ENCODE measurements at regions of chr18 and their contacts with region 1.

Region 1: GRCh38 chr18:11034884-11035283 is 114.5 kb downstream of the PIEZO2 start:
- DNase-seq: peak; percentile 5
- H3K4me3 Mint-ChIP-seq: no peak overlapping the region
- H3K27ac Mint-ChIP-seq: no peak overlapping the region
- H3K4me1 Mint-ChIP-seq: peaks cover 10% of the 10 kb centered on the region
- H3K27me3 Mint-ChIP-seq: no peaks in the 10 kb centered on the region
- CTCF ChIP-seq: no peak

Region 2: DNA sequence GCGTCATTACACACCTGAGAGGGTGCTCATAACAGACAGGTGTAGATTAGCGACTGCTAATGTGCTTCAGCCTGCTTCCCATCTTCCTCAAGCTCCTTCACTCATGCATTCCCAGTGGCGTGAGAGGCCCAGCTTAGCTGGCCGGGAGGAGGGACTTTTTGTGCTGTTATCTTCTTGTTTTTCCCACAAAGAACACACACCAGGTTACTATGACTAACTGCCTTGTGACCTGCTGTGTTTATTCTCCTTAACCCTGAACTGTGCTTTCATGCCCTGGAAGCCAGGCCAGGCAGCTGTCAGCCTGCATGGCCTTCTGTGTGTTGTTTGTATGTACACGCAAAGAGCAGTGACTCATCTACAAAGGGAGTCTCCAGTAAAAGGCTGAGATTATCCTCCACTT is 29.4 kb before region 1 on chr18:
- CTCF ChIA-PET with region 1: interaction called, 5 read pairs
- POLR2A ChIA-PET with region 1: interaction called, 11 read pairs
- intact Hi-C with region 1: loop called (anchors 5 kb)
- DNase-seq: peak; percentile 56
- H3K4me3 Mint-ChIP-seq: peak overlapping the region; percentile 66
- H3K27ac Mint-ChIP-seq: peak overlapping the region; percentile 93
- H3K4me1 Mint-ChIP-seq: peaks cover 36% of the 10 kb centered on the region
- H3K27me3 Mint-ChIP-seq: no peaks in the 10 kb centered on the region
- CTCF ChIP-seq: no peak

Region 3: GRCh38 chr18:11104307-11104706 is 69.4 kb after region 1 on chr18:
- CTCF ChIA-PET with region 1: no interaction called
- POLR2A ChIA-PET with region 1: no interaction called
- intact Hi-C with region 1: no loop called
- DNase-seq: no peak
- H3K4me3 Mint-ChIP-seq: no peak overlapping the region
- H3K27ac Mint-ChIP-seq: no peak overlapping the region
- H3K4me1 Mint-ChIP-seq: no peaks in the 10 kb centered on the region
- H3K27me3 Mint-ChIP-seq: no peaks in the 10 kb centered on the region
- CTCF ChIP-seq: no peak

Measured in MCF 10A (cell line).